ENCODE measurements at regions of chr1 and their contacts with region 1.

Region 1: DNA sequence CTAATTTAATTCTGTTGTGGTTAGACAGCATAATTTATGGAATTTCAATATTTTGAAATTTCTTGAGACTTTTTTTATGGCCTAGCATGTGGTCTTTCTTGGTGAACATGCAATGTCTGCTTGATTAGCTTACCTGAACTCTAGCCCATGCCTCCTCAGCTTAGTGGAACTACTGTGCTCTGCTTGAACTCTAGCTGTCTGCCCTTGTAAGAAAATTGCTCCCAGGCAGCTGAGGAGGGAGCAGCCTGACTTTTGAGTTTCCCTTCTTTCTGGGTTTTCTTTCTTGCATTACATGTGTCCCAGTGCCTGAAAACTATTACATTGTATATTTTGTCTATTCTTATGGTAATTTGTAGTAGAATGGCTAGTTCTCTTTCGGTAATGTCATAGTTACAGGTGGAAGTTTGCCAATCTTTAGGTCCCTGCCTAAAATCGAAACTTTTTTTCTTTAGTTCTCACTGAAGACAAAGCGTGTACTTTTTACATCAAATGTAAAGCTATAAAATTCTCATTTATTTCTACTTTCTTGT is 105.3 kb downstream of the MAST2 start:
- DNase-seq: no peak
- H3K4me3 ChIP-seq: no peak overlapping the region
- H3K27ac ChIP-seq: no peak overlapping the region
- H3K4me1 ChIP-seq: no peaks in the 10 kb centered on the region
- H3K27me3 ChIP-seq: no peaks in the 10 kb centered on the region
- CTCF ChIP-seq: no peak

Region 2: DNA sequence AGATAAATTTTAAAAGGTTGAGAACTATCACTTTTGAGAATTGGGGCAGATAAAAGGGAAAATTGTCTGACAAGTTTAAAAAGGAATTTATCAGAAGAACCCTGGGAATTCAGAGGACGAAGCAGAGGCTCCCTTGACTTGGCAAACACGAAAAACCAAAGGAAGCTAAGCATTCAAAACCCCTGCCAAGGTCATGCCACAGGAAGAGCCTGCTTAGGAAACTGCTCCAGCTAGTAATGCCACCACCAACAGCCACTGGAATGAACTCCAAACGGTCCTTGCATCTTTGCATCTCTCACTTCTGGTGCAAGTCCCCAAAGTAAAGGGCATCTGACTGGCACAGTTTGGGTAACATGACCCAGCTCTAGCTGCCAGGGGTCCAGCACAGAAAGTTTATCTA is 229.6 kb before region 1 on chr1:
- CTCF ChIA-PET with region 1: interaction called, 15 read pairs
- POLR2A ChIA-PET with region 1: no interaction called
- intact Hi-C with region 1: no loop called
- DNase-seq: no peak
- H3K4me3 ChIP-seq: no peak overlapping the region
- H3K27ac ChIP-seq: no peak overlapping the region
- H3K4me1 ChIP-seq: peaks cover under 1% of the 10 kb centered on the region; the same call in 1 of the 2 replicates
- H3K27me3 ChIP-seq: no peaks in the 10 kb centered on the region
- CTCF ChIP-seq: no peak

Region 3: GRCh38 chr1:46303038-46303871 is 394.6 kb after region 1 on chr1 and contains the starts of genes LRRC41 and UQCRH:
- CTCF ChIA-PET with region 1: no interaction called
- POLR2A ChIA-PET with region 1: no interaction called
- intact Hi-C with region 1: no loop called
- DNase-seq: peak; percentile 94 to 95
- H3K4me3 ChIP-seq: peak within 1 kb of the TSS; percentile 95
- H3K27ac ChIP-seq: peak within 1 kb of the TSS; percentile 87
- H3K4me1 ChIP-seq: peaks cover 35% of the 10 kb centered on the region
- H3K27me3 ChIP-seq: no peaks in the 10 kb centered on the region
- CTCF ChIP-seq: 0 out of 2 replicates have a peak, but pooled peaks have one; percentile 12
- total RNA-seq, gene LRRC41: 65.9 and 66.3 TPM in 2 replicates
- total RNA-seq, gene UQCRH: 457 and 551 TPM in 2 replicates